ENCODE measurements at regions of chr2 and their contacts with region 1.

Region 1: GRCh38 chr2:105744091-105744908 is 412 bp upstream of the NCK2 start:
- DNase-seq: no peak
- H3K4me3 ChIP-seq: peak overlapping the region; percentile 80 to 98 (median 94)
- H3K27ac ChIP-seq: peak overlapping the region; percentile 86 to 96 (median 92)
- H3K4me1 ChIP-seq: peaks cover 35 to 50% (median 42%) of the 10 kb centered on the region in 4 donors
- H3K27me3 ChIP-seq: no peaks in the 10 kb centered on the region
- CTCF ChIP-seq: no peak
- EP300 ChIP-seq: no peak
- POLR2A ChIP-seq: no peak

Region 2: GRCh38 chr2:105576440-105577252 is 167.7 kb before region 1 on chr2:
- intact Hi-C with region 1: loop called (anchors 2 kb)
- DNase-seq: no peak
- H3K4me3 ChIP-seq: no peak overlapping the region
- H3K27ac ChIP-seq: peak overlapping the region in 3 of 4 donors; percentile 10 to 31 (median 11)
- H3K4me1 ChIP-seq: peaks cover 9 to 28% (median 24%) of the 10 kb centered on the region in 4 donors
- H3K27me3 ChIP-seq: no peaks in the 10 kb centered on the region
- CTCF ChIP-seq: peak; percentile 60 to 71 (median 61)
- EP300 ChIP-seq: no peak
- POLR2A ChIP-seq: no peak

Region 3: GRCh38 chr2:106065268-106065982 is 321.1 kb after region 1 on chr2:
- intact Hi-C with region 1: loop called (anchors 10 kb)
- DNase-seq: peak; percentile 64
- H3K4me3 ChIP-seq: peak overlapping the region; percentile 64 to 75 (median 68)
- H3K27ac ChIP-seq: peak overlapping the region; percentile 55 to 77 (median 70)
- H3K4me1 ChIP-seq: peaks cover 11 to 32% (median 24%) of the 10 kb centered on the region in 4 donors
- H3K27me3 ChIP-seq: peaks cover 0 to 10% (median 0%) of the 10 kb centered on the region in 4 donors
- CTCF ChIP-seq: no peak
- EP300 ChIP-seq: no peak
- POLR2A ChIP-seq: no peak

Region 4: DNA sequence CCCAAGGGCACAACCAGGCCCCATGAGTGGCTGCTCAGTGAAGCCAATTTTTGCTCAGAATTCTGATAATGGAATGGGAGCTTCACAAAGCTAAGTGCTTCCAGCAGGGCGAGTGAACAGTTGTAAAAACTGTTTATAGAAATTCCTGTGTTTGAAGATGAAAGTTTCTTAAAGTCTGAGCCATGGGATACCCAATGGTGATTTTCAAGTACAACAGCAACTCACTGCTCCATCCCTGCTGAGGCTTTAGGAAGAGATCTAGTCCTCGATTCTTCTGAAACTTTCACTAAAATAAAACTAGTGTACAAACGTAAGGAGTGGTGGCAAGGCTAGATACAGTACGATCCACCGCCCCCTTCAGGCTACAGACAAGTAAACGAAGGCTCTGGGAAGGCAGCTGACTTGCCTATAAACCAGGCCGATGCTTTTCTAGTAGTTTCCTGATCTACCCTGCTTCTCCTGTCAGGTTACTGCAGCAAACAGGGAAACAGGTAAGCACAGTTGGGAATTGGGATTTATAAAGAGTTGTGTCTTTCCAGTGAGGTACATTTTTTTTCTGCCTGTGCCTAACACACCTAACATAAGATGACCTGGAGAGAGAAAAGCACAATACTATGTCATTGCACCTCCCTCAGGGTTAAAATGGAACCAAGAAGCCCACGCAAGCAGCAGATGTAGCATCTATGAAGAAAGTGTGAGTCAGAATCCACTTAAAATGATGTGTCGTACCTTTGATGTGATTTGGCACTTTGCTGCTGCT is 341.1 kb after region 1 on chr2:
- intact Hi-C with region 1: loop called (anchors 5 kb)
- DNase-seq: peak; percentile 87
- H3K4me3 ChIP-seq: no peak overlapping the region
- H3K27ac ChIP-seq: no peak overlapping the region
- H3K4me1 ChIP-seq: peaks cover 0 to 9% (median 7%) of the 10 kb centered on the region in 4 donors
- H3K27me3 ChIP-seq: no peaks in the 10 kb centered on the region
- CTCF ChIP-seq: peak; percentile 31 to 52 (median 44)
- EP300 ChIP-seq: no peak
- POLR2A ChIP-seq: no peak

Measured in esophagus muscularis mucosa (tissue), 4 donors.